CD8-positive, alpha-beta T cell (primary cell): ENCODE measurements at regions of chrX and their contacts with region 1.

Region 1: DNA sequence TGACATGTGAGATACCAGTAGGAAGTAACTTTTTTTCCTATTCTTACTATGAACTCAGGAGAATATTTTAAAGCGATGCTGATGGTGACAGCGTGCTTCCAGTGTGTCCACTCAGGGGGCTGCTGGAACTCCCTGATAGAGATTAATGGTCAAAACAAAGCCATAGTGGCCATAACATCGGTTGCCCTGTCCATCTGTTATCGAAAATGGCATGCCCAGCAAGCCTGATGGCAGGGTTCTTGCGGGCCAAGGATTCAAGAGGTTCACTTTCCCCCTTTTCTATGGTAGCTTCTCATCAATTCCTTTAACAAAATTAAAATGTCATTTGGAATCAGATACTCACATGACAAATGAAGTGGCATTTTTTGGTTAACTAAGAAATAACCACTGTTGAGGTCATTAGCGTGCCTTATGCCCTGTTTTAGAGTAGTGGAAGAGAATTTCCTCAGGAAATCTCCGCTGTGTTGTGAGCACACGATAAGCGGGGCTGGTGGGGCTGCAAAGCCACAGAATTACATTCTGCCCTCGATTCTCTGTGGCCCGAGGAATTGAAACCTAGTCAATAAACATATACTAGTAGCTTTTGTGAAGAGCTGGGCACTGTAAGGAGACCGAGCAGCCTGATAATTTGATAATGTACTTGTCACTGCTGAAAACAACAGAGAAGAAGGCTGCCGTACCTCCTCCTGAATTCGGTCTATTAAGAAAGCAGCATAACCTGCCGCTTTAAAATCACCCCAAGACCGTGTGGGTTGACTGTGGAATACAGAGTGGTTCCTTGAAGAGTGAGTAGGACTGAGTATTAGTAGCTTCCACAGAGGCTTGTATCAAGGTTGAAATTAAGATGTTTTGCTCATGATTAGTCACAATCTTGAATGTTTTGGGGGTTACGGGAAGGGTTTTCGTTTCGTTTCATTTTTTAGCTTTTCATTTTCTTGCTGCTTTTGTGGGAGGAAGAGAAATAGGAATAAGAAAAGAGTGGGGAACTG is 46.7 kb downstream of the PTCHD1 start:
- DNase-seq: no peak
- ATAC-seq: no peak
- H3K4me3 ChIP-seq: no peak overlapping the region
- H3K4me3 Mint-ChIP-seq: peak overlapping the region; percentile 35
- H3K27ac ChIP-seq: no peak overlapping the region
- H3K27ac Mint-ChIP-seq: no peak overlapping the region
- H3K4me1 ChIP-seq: no peaks in the 10 kb centered on the region
- H3K4me1 Mint-ChIP-seq: peaks cover 8% of the 10 kb centered on the region
- H3K27me3 ChIP-seq: no peaks in the 10 kb centered on the region
- H3K27me3 Mint-ChIP-seq: peaks cover 5% of the 10 kb centered on the region
- CTCF ChIP-seq: no peak

Region 2: GRCh38 chrX:22882543-22882942 is 498.9 kb before region 1 on chrX:
- CTCF ChIA-PET with region 1: no interaction called
- POLR2A ChIA-PET with region 1: no interaction called
- intact Hi-C with region 1: no loop called
- DNase-seq: no peak
- ATAC-seq: no peak
- H3K4me3 ChIP-seq: no peak overlapping the region
- H3K4me3 Mint-ChIP-seq: no peak overlapping the region
- H3K27ac ChIP-seq: no peak overlapping the region
- H3K27ac Mint-ChIP-seq: no peak overlapping the region
- H3K4me1 ChIP-seq: no peaks in the 10 kb centered on the region
- H3K4me1 Mint-ChIP-seq: no peaks in the 10 kb centered on the region
- H3K27me3 ChIP-seq: no peaks in the 10 kb centered on the region
- H3K27me3 Mint-ChIP-seq: no peaks in the 10 kb centered on the region
- CTCF ChIP-seq: no peak

Region 3: DNA sequence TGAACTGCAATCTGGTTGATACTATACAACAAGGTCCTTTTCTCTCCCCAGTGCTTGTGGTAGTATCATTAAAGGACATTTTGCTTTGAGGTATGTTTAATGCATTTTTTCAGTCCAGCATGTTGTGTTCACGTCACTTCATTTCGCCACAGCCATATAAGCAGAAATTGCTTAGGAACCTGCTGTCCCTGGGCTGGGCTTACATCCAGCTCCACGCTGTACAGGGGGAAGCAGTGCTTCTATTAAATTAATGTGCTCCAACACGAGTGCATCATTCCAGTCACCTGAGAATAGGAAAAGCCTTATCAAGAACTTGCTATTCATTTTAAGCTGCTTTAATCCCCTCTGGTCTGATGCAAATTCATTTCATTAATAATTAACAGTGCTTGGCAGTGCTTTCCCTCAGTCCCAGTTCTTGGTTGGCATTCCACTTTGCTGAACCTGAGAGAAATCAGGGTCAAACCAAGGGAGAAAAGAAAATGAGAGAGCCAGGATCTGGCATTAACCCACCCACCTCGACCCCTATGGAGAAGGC is 94.1 kb before region 1 on chrX:
- CTCF ChIA-PET with region 1: no interaction called
- POLR2A ChIA-PET with region 1: no interaction called
- intact Hi-C with region 1: no loop called
- DNase-seq: no peak
- ATAC-seq: no peak
- H3K4me3 ChIP-seq: no peak overlapping the region
- H3K4me3 Mint-ChIP-seq: no peak overlapping the region
- H3K27ac ChIP-seq: no peak overlapping the region
- H3K27ac Mint-ChIP-seq: no peak overlapping the region
- H3K4me1 ChIP-seq: no peaks in the 10 kb centered on the region
- H3K4me1 Mint-ChIP-seq: no peaks in the 10 kb centered on the region
- H3K27me3 ChIP-seq: no peaks in the 10 kb centered on the region
- H3K27me3 Mint-ChIP-seq: no peaks in the 10 kb centered on the region
- CTCF ChIP-seq: no peak

Region 4: DNA sequence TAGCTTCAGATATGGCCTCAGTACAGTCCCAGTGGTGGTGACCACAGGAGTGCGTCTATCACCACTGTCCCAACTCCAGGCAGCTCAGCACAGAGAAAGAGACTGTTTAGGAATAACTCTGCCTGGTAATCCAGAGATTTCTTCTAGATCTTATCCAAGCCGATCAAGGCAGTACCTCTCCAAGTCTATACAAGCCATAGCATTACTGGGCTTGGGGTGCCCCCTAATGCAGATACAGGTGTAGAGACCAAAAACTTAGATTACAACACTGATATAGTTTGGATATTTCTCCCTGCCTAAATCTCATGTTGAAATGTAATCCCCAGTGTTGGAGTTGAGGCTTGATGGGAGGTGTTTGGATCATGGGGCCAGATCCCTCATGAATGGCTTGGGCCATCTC is 54.2 kb after region 1 on chrX:
- CTCF ChIA-PET with region 1: no interaction called
- POLR2A ChIA-PET with region 1: no interaction called
- intact Hi-C with region 1: loop called in 1 of 2 experiments (anchors 2 kb)
- DNase-seq: no peak
- ATAC-seq: no peak
- H3K4me3 ChIP-seq: no peak overlapping the region
- H3K4me3 Mint-ChIP-seq: no peak overlapping the region
- H3K27ac ChIP-seq: no peak overlapping the region
- H3K27ac Mint-ChIP-seq: no peak overlapping the region
- H3K4me1 ChIP-seq: no peaks in the 10 kb centered on the region
- H3K4me1 Mint-ChIP-seq: no peaks in the 10 kb centered on the region
- H3K27me3 ChIP-seq: no peaks in the 10 kb centered on the region
- H3K27me3 Mint-ChIP-seq: no peaks in the 10 kb centered on the region
- CTCF ChIP-seq: no peak